Heart left ventricle (tissue), 16 donors: ENCODE measurements at regions of chr15 and their contacts with region 1.

Region 1: DNA sequence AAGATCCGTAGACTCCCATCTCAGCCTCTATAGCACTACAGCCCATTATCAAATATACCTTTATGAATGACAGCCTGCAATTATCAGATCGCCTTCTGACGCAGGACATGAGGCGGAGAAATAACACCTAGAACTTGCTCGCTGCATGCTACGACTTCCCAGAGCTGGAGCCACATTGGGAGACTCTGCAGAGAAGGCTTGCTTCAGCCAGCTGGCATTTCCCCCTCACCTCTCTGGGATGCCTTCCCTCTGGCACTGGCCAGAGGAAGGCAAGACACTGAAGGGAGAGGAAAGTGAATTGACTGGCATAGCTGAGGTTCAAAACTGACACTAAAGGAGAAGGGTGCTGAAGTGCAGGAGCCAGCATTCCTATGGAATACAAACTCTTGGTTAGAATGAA is 131.7 kb downstream of the GABRB3 start:
- DNase-seq: no peak
- ATAC-seq: no peak
- H3K4me3 ChIP-seq: no peak overlapping the region
- H3K27ac ChIP-seq: no peak overlapping the region
- H3K4me1 ChIP-seq: no peaks in the 10 kb centered on the region
- H3K27me3 ChIP-seq: no peaks in the 10 kb centered on the region
- CTCF ChIP-seq: no peak
- POLR2A ChIP-seq: no peak

Region 2: DNA sequence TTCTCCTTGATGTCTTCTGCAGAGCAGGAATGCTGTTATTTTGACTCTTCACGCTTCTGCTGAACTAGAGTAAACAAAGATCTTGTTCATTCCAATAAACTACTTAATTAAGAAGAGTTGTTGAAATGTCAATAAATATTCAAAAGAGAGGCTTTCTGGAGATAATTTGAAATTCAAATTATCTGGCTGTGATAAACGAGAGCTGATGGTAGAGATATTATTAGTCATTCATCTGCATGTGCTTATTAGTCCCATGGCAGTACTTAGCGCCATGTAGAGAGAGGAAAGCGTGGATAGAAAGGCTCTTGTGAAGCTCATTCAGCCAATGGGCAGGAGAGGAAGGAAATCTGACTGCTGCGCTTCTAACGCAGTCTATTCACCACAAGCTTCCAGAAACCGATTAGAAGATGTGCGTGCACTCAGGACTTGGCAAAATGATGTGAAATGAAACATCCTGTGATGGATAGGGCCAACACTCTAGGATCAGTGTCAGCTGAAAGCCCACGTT is 119.4 kb before region 1 on chr15:
- intact Hi-C with region 1: loop called in 1 of 10 experiments (anchors 10 kb)
- DNase-seq: no peak
- ATAC-seq: no peak
- H3K4me3 ChIP-seq: no peak overlapping the region
- H3K27ac ChIP-seq: no peak overlapping the region
- H3K4me1 ChIP-seq: no peaks in the 10 kb centered on the region
- H3K27me3 ChIP-seq: no peaks in the 10 kb centered on the region
- CTCF ChIP-seq: no peak
- POLR2A ChIP-seq: no peak

Region 3: DNA sequence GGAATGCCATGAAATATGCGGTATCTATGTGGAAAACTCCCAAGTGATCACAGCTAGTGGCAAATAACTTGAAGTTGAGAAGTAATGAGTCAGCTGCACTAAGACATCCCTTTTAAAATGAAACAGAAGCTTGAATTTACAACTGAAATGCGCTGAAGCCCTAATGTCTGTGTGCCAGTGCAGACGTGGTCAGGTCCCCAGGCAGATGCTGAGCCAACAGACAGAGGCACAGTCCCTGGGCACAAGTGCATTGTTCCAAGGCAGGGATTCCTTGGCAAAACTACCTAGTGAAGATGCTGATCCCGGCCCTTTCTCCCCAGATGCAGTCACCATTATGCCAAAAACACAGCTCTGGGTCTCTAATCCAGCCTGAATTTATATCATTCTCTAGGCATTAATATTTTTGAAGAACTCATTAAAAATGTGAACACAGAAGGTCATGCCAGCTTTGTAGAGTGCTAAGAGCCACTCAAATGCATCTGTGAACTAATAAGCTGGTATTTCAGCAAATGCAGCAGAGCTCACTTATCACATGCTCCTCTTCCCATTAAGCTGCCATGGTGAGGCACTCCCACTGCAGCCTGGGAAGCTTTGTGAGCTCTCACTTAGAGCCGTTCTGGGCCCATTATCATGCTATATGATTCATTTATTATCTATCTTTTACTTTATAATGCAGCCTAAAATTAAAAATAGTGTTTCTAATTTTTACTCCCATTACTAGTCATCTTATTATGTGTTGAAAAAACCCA is 68.4 kb before region 1 on chr15:
- intact Hi-C with region 1: no loop called
- DNase-seq: no peak
- ATAC-seq: no peak
- H3K4me3 ChIP-seq: no peak overlapping the region
- H3K27ac ChIP-seq: no peak overlapping the region
- H3K4me1 ChIP-seq: no peaks in the 10 kb centered on the region
- H3K27me3 ChIP-seq: no peaks in the 10 kb centered on the region
- CTCF ChIP-seq: no peak
- POLR2A ChIP-seq: no peak

Region 4: DNA sequence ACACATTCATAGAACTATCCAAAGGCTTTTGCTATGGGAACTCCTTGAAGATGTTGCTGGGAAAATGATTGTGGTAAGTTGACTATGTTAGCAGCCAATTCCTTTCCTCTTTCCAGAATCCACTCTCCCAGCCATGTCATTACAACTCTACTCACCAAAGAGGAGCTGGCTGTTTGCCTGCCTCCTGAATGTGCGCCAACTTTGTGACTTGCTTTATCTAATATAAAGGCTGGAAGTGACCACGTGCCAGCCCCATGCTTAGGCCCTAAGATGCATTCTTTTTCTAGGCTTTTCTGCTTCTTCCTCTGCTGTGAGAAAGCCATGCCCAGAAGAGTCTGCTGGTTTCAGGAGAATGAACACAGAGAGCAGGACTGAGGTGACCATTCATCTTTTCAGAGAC is 50.5 kb before region 1 on chr15:
- intact Hi-C with region 1: loop called in 1 of 10 experiments (anchors 5 kb)
- DNase-seq: peak in 1 of 5 donors; percentile 34
- ATAC-seq: no peak
- H3K4me3 ChIP-seq: no peak overlapping the region
- H3K27ac ChIP-seq: no peak overlapping the region
- H3K4me1 ChIP-seq: no peaks in the 10 kb centered on the region
- H3K27me3 ChIP-seq: no peaks in the 10 kb centered on the region
- CTCF ChIP-seq: no peak
- POLR2A ChIP-seq: no peak